Mammary epithelial cell (primary cell): ENCODE measurements at regions of chr3 and their contacts with region 1.

Region 1: GRCh38 chr3:148439254-148439822 is 258.4 kb upstream of the AGTR1 start:
- DNase-seq: no peak
- H3K4me3 ChIP-seq: no peak overlapping the region
- H3K27ac ChIP-seq: no peak overlapping the region
- H3K4me1 ChIP-seq: no peaks in the 10 kb centered on the region
- H3K27me3 ChIP-seq: no peaks in the 10 kb centered on the region
- CTCF ChIP-seq: no peak

Region 2: GRCh38 chr3:147298511-147298982 is 1140.8 kb before region 1 on chr3:
- CTCF ChIA-PET with region 1: no interaction called
- dilution Hi-C with region 1: no loop called
- in situ Hi-C with region 1: no loop called
- intact Hi-C with region 1: loop called (anchors 5 kb)
- DNase-seq: peak; percentile 76
- H3K4me3 ChIP-seq: no peak overlapping the region
- H3K27ac ChIP-seq: no peak overlapping the region
- H3K4me1 ChIP-seq: no peaks in the 10 kb centered on the region
- H3K27me3 ChIP-seq: no peaks in the 10 kb centered on the region
- CTCF ChIP-seq: no peak

Region 3: DNA sequence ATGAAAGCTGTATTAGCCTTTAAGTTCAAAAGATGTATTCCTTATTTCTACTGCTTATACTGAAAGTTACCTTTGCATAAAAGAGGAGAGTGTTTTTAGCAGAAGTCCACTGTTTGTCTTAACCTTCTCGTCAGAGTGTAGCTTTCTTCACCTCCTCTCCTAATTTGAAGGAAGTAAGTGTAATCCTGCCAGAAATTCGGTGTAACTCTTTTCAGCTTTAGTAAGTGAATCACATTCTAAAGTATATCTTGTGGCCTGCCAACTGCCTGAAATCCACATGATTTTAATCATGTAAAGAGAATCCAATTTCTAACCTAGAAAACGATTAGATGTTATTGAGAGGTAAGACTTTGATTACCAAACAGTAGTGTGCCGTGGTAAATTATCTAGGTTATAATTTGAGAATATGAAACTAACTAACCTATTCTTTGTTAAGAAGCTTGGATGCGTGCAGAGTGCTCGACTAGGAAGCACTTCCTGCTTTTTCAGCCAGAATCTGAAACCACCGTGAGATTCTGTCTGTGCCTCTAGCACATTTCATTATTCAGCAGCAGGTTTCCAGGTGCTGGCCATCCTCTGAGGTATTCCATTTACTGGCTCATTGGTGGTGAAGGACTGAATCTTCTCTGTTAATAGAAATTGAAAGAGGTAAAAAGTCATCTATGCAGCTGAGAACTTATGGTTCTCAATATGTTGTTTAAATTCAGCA is 559.5 kb after region 1 on chr3:
- CTCF ChIA-PET with region 1: no interaction called
- dilution Hi-C with region 1: no loop called
- in situ Hi-C with region 1: no loop called
- intact Hi-C with region 1: no loop called
- DNase-seq: peak; percentile 45
- H3K4me3 ChIP-seq: peak overlapping the region in 1 of 3 experiments; percentile 21
- H3K27ac ChIP-seq: peak overlapping the region; percentile 15
- H3K4me1 ChIP-seq: peaks cover 9% of the 10 kb centered on the region
- H3K27me3 ChIP-seq: no peaks in the 10 kb centered on the region
- CTCF ChIP-seq: no peak

Region 4: GRCh38 chr3:149224736-149225594 is 785.6 kb after region 1 on chr3:
- CTCF ChIA-PET with region 1: no interaction called
- dilution Hi-C with region 1: no loop called
- in situ Hi-C with region 1: no loop called
- intact Hi-C with region 1: no loop called
- DNase-seq: peak; percentile 96
- H3K4me3 ChIP-seq: peak overlapping the region; percentile 30 to 48 (median 41)
- H3K27ac ChIP-seq: peak overlapping the region; percentile 96
- H3K4me1 ChIP-seq: peaks cover 17% of the 10 kb centered on the region
- H3K27me3 ChIP-seq: no peaks in the 10 kb centered on the region
- CTCF ChIP-seq: no peak